CD14-positive monocyte (primary cell): ENCODE measurements at regions of chr1 and their contacts with region 1.

Region 1: DNA sequence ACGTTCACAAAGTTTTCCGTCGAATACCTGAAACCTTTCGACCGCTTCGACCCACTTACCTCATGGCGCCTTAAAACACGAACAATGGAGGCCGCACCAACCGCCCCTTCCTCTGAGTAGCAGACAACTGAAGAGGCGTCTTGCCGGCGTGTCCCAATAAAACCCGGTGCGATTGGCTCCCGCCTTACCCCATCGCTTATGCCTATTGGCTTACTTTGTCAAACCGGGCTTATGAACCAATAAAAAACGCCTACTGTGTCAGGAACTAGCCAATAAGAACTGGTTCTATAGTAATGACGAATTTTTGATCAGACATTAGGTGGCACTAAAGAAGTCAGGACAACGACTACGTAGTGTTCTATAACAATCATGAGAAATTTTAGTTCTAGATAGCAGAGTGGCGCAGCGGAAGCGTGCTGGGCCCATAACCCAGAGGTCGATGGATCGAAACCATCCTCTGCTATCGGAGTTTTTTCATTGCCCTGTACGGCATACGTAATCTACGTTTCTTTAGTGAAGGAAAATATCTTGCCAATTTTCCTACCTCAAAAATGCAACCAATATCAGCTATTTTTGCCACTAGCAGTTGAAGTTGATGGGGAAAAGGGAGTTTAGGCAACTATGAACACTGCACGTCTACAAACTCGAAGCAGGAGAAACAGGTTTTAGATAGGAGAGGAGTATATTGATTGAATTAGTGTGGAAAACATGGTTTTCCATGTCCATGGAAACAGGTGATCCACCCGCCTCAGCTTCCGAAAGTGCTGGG is at the start of gene ILF2:
- DNase-seq: peak; percentile 98 to 100 (median 99)
- H3K4me3 ChIP-seq: peak within 1 kb of the TSS; percentile 90 to 95 (median 93)
- H3K4me3 Mint-ChIP-seq: no peak within 1 kb of the TSS
- H3K27ac ChIP-seq: peak within 1 kb of the TSS; percentile 81 to 88
- H3K27ac Mint-ChIP-seq: peak within 1 kb of the TSS in 3 of 7 donors; percentile 17 to 78 (median 59)
- H3K4me1 ChIP-seq: peaks cover 9 to 18% of the 10 kb centered on the region in 2 donors
- H3K4me1 Mint-ChIP-seq: peaks cover 17% of the 10 kb centered on the region
- H3K27me3 ChIP-seq: no peaks in the 10 kb centered on the region
- H3K27me3 Mint-ChIP-seq: no peaks in the 10 kb centered on the region
- CTCF ChIP-seq: no peak
- polyA plus RNA-seq, gene ILF2: 103 to 118 (median 115) TPM

Region 2: DNA sequence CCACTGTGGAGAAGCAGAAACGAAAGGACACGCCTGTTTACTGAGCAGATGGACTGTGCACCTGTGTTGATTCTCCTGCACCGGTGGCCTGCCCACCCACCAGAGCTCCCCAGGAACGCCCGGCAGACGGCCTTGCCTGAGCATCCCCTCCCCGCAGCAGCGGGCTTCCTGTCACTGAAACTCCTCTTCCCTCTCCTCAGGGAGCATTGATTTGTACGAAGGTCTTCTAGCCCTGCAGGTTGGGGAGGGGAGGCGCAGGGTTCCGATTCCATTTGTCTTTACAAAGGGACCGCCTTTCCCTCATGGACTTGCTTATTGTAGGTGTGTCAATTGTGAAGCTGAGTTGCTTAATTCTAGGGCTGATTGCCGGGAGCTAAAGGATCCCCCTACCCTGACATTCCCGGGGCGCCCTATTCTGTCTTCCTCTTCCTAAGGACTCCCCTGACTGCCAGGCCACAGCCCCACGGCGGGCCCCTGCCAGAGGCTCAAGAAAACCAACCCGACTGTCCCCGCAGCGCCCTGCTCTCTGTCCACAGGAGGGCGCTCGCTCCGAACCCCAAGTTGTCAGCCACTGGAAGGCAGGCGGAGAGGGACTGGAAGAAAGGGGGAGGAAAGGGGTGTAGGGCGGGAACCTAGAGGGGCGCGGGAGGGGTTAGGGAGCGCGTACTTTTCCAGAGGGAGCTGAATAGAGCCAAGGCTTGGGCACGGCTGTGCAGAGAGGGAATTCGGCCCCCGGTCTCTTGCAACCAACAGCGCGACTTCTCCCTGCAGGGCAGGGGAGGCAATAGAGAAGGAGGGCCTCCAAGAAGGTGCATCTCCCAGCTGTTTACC is 138.1 kb before region 1 on chr1:
- intact Hi-C with region 1: no loop called
- DNase-seq: peak; percentile 80 to 83 (median 80)
- H3K4me3 ChIP-seq: peak overlapping the region; percentile 70 to 91 (median 84)
- H3K4me3 Mint-ChIP-seq: peak overlapping the region; percentile 93 to 97
- H3K27ac ChIP-seq: peak overlapping the region; percentile 96 to 98
- H3K27ac Mint-ChIP-seq: peak overlapping the region; percentile 94 to 99 (median 96)
- H3K4me1 ChIP-seq: peaks cover 54 to 61% of the 10 kb centered on the region in 2 donors
- H3K4me1 Mint-ChIP-seq: peaks cover 61% of the 10 kb centered on the region
- H3K27me3 ChIP-seq: no peaks in the 10 kb centered on the region
- H3K27me3 Mint-ChIP-seq: peaks cover 0 to 2% (median 0%) of the 10 kb centered on the region in 3 donors
- CTCF ChIP-seq: peak; percentile 89

Region 3: GRCh38 chr1:153658400-153659174 is 12.5 kb before region 1 on chr1 and contains the start of gene SNAPIN:
- intact Hi-C with region 1: loop called in 1 of 2 experiments (anchors 1 kb)
- DNase-seq: peak; percentile 71 to 84 (median 78)
- H3K4me3 ChIP-seq: peak within 1 kb of the TSS; percentile 64 to 92 (median 84)
- H3K4me3 Mint-ChIP-seq: peak within 1 kb of the TSS; percentile 92 to 95
- H3K27ac ChIP-seq: peak within 1 kb of the TSS; percentile 61 to 83
- H3K27ac Mint-ChIP-seq: peak within 1 kb of the TSS; percentile 76 to 95 (median 91)
- H3K4me1 ChIP-seq: peaks cover 17 to 23% of the 10 kb centered on the region in 2 donors
- H3K4me1 Mint-ChIP-seq: peaks cover 15% of the 10 kb centered on the region
- H3K27me3 ChIP-seq: no peaks in the 10 kb centered on the region
- H3K27me3 Mint-ChIP-seq: no peaks in the 10 kb centered on the region
- CTCF ChIP-seq: peak; percentile 11
- polyA plus RNA-seq, gene SNAPIN: 30.7 to 141 (median 135) TPM

Region 4: GRCh38 chr1:153727463-153728304 is 56.6 kb after region 1 on chr1 and contains the start of gene INTS3:
- intact Hi-C with region 1: loop called in 1 of 2 experiments (anchors 2 kb)
- DNase-seq: peak; percentile 100
- H3K4me3 ChIP-seq: peak within 1 kb of the TSS; percentile 72 to 86 (median 72)
- H3K4me3 Mint-ChIP-seq: peak within 1 kb of the TSS; percentile 88 to 97
- H3K27ac ChIP-seq: peak within 1 kb of the TSS; percentile 84 to 94
- H3K27ac Mint-ChIP-seq: peak within 1 kb of the TSS; percentile 93 to 99 (median 96)
- H3K4me1 ChIP-seq: peaks cover 24 to 31% of the 10 kb centered on the region in 2 donors
- H3K4me1 Mint-ChIP-seq: peaks cover 22% of the 10 kb centered on the region
- H3K27me3 ChIP-seq: no peaks in the 10 kb centered on the region
- H3K27me3 Mint-ChIP-seq: peaks cover 1 to 4% (median 3%) of the 10 kb centered on the region in 3 donors
- CTCF ChIP-seq: no peak
- polyA plus RNA-seq, gene INTS3: 9.2 to 76.9 (median 15.9) TPM